HEK293T (cell line): ENCODE measurements at regions of chr17 and their contacts with region 1.

Region 1: DNA sequence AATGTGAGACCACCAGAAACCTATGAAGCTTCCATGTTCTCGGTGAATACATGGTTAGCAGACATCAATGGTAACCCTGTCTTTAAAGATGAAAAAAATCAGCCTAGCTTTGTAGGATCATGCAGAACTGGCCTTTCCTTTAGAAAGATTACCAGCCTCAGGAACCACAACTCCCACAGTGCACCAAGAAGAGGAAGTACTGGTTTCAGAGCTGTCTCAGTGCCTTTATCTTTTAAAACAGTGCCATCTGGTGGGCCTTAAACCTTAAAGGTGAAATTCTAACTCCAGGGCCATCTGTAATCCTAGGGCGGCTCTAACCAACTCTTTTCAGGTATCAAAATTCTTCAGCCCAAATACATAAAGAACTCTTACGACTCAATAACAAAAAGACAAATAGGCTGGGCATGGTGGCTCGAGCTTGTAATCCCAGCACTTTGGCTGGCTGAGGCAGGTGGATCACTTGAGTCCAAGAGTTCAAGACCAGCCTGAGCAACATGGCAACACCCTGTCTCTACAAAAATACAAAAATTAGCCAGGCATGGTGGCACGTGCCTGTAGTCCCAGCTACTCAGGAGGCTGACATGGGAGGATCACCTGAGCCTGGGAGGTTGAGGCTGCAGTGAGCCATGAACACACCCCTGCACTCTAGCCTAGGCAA is 5.4 kb downstream of the ATPAF2 start:
- DNase-seq: peak; percentile 74

Region 2: DNA sequence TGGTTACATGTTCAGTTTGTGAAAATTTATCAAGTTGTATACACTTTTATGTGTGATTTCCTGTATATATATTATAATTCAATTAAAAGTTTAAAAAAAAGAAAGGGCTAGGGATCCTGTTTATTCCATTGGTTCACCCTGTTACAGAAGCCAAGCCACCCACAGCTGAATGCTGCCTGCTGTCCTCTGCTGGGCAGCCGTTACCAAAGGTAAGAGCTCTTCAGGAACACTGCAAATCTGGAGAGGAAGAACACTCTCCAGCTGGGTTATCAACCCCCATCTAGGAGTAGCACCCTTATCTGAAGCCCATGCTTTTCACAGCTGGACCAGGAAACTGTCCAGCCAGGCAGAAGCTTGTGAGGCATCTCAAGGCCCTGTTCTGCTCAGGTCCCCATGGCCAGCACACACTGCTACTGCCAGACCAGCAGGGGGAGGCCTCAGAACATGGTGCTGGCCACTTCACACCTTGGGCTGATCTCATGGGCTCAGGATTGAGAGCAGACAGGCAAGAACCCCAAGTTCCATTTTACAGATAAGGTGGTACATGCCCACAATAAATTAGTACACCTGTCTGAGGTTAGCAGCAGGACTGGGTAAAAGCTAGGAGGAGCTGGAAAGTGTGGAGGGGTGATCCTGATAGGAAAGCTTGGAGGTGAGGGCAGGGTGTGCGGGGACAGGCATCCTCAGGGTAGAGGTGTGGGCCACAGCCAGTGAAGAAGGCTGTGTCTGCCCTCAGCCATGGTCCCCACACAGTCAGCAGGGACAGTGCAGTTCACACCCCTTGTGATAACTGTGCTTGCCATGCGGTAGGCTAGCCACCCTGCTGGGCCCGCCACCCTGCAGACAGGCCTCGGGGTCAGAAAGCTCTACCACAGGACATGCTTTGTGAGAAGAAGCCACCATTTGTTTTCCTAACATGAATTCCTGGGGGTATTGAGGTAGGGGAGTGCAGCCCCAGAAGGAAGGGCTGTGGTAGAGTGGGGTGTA is 142.5 kb before region 1 on chr17:
- CTCF ChIA-PET with region 1: interaction called, 11 read pairs
- POLR2A ChIA-PET with region 1: interaction called, 3 read pairs
- DNase-seq: peak; percentile 67